ENCODE measurements at regions of chr3 and their contacts with region 1.

Region 1: GRCh38 chr3:137946345-137946973 is 63.5 kb upstream of the CLDN18 start:
- DNase-seq: peak; percentile 71
- ATAC-seq: peak; percentile 47
- H3K4me3 Mint-ChIP-seq: no peak overlapping the region
- H3K27ac Mint-ChIP-seq: no peak overlapping the region
- H3K4me1 Mint-ChIP-seq: peaks cover 5% of the 10 kb centered on the region
- H3K27me3 Mint-ChIP-seq: no peaks in the 10 kb centered on the region

Region 2: GRCh38 chr3:137121704-137122314 is 824.6 kb before region 1 on chr3:
- CTCF ChIA-PET with region 1: no interaction called
- POLR2A ChIA-PET with region 1: no interaction called
- intact Hi-C with region 1: loop called (anchors 1 kb)
- DNase-seq: peak; percentile 52
- ATAC-seq: peak; percentile 44
- H3K4me3 Mint-ChIP-seq: no peak overlapping the region
- H3K27ac Mint-ChIP-seq: no peak overlapping the region
- H3K4me1 Mint-ChIP-seq: no peaks in the 10 kb centered on the region
- H3K27me3 Mint-ChIP-seq: peaks cover 7% of the 10 kb centered on the region

Region 3: DNA sequence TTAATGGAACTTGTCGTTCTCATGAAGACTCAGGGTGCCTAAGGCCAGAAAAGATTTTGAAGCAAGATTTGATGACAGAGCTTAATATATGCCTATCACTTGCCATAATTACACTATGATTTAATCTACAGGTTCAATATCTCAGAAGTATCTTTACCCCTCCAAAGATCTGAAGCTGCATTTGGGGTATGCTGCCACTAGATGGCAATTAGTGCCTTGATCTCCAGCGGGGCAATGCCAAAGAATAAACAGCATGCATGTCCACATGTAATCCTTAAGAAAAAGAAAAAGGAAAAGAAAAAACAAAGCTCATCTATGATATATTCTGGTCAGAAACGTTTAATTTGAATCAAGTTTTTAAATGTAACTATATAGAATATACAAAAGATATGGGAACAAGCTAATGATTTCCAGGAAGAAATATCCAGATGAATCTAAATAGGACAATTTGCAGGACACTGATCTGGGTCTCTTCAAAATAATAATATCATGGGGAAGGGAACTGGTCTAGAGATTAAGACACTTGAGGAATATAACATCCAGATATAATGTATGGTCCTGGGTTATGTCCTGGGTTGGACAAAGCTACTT is 237.4 kb before region 1 on chr3:
- CTCF ChIA-PET with region 1: no interaction called
- POLR2A ChIA-PET with region 1: no interaction called
- intact Hi-C with region 1: loop called in 1 of 2 experiments (anchors 2 kb)
- DNase-seq: peak; percentile 10
- ATAC-seq: no peak
- H3K4me3 Mint-ChIP-seq: no peak overlapping the region
- H3K27ac Mint-ChIP-seq: no peak overlapping the region
- H3K4me1 Mint-ChIP-seq: no peaks in the 10 kb centered on the region
- H3K27me3 Mint-ChIP-seq: peaks cover 2% of the 10 kb centered on the region

Region 4: DNA sequence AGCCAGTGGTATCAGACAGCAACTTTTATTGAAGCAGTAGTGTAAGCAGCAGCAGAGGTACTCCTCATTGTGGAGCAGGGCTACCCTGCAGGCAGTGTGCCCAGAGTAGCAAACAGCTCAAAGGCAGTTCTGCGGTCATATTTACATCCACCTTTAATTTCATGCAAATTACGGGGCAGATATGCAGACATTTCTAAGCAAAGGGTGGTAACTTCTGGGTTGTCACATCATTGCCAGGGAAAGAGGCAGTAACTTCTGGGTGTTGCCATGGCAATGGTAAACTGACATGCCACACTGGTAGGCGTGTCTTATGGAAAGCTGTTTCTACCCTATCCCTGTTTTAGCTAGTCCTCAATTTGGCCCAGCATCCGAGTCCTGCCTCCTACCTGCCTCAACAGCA is 17.0 kb after region 1 on chr3:
- CTCF ChIA-PET with region 1: interaction called, 13 read pairs
- POLR2A ChIA-PET with region 1: no interaction called
- intact Hi-C with region 1: no loop called
- DNase-seq: no peak
- ATAC-seq: no peak
- H3K4me3 Mint-ChIP-seq: no peak overlapping the region
- H3K27ac Mint-ChIP-seq: no peak overlapping the region
- H3K4me1 Mint-ChIP-seq: no peaks in the 10 kb centered on the region
- H3K27me3 Mint-ChIP-seq: no peaks in the 10 kb centered on the region

Region 5: DNA sequence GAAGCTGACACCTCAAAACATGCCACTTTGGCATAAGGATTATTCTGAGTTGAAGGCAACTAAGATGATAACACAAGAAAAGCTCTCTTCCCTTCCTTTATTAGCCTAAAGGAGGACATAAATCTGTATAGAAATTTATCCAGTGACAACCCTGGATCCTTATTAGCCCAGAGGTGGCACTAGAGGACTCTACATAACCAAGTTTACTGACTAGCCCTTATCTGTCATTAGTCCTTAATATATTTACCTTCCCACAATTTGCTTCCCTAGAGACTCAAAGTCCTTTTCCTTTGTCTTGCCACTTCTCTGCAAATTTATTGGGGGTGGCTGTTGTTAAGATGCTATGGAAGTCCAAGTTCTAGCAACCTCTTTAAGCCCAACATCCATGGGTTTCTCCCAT is 620.9 kb after region 1 on chr3:
- CTCF ChIA-PET with region 1: no interaction called
- POLR2A ChIA-PET with region 1: no interaction called
- intact Hi-C with region 1: no loop called
- DNase-seq: no peak
- ATAC-seq: no peak
- H3K4me3 Mint-ChIP-seq: no peak overlapping the region
- H3K27ac Mint-ChIP-seq: no peak overlapping the region
- H3K4me1 Mint-ChIP-seq: peaks cover 9% of the 10 kb centered on the region
- H3K27me3 Mint-ChIP-seq: no peaks in the 10 kb centered on the region